ENCODE measurements at regions of chr6 and their contacts with region 1.

Region 1: GRCh38 chr6:161418463-161418945 is 144.6 kb upstream of the AGPAT4 start:
- DNase-seq: peak in 6 of 9 donors; percentile 2 to 40 (median 28)
- ATAC-seq: no peak
- H3K4me3 ChIP-seq: no peak overlapping the region
- H3K4me3 Mint-ChIP-seq: no peak overlapping the region
- H3K27ac ChIP-seq: no peak overlapping the region
- H3K27ac Mint-ChIP-seq: no peak overlapping the region
- H3K4me1 ChIP-seq: no peaks in the 10 kb centered on the region
- H3K4me1 Mint-ChIP-seq: no peaks in the 10 kb centered on the region
- H3K27me3 ChIP-seq: no peaks in the 10 kb centered on the region
- H3K27me3 Mint-ChIP-seq: peaks cover 0 to 18% (median 11%) of the 10 kb centered on the region in 5 donors

Region 2: GRCh38 chr6:161694995-161695394 is 276.5 kb after region 1 on chr6:
- CTCF ChIA-PET with region 1: no interaction called
- POLR2A ChIA-PET with region 1: no interaction called
- intact Hi-C with region 1: loop called in 1 of 2 experiments (anchors 1 kb)
- DNase-seq: no peak
- ATAC-seq: no peak
- H3K4me3 ChIP-seq: no peak overlapping the region
- H3K4me3 Mint-ChIP-seq: no peak overlapping the region
- H3K27ac ChIP-seq: no peak overlapping the region
- H3K27ac Mint-ChIP-seq: no peak overlapping the region
- H3K4me1 ChIP-seq: no peaks in the 10 kb centered on the region
- H3K4me1 Mint-ChIP-seq: peaks cover 0 to 2% (median 0%) of the 10 kb centered on the region in 7 donors
- H3K27me3 ChIP-seq: no peaks in the 10 kb centered on the region
- H3K27me3 Mint-ChIP-seq: no peaks in the 10 kb centered on the region

Region 3: GRCh38 chr6:162736961-162737360 is 1318.5 kb after region 1 on chr6:
- CTCF ChIA-PET with region 1: interaction called, 3 read pairs
- POLR2A ChIA-PET with region 1: no interaction called
- intact Hi-C with region 1: loop called in 1 of 2 experiments (anchors 2 kb)
- DNase-seq: no peak
- ATAC-seq: no peak
- H3K4me3 ChIP-seq: no peak overlapping the region
- H3K4me3 Mint-ChIP-seq: no peak overlapping the region
- H3K27ac ChIP-seq: no peak overlapping the region
- H3K27ac Mint-ChIP-seq: no peak overlapping the region
- H3K4me1 ChIP-seq: peaks cover 0 to 8% of the 10 kb centered on the region in 2 donors
- H3K4me1 Mint-ChIP-seq: peaks cover 5 to 13% (median 11%) of the 10 kb centered on the region in 7 donors
- H3K27me3 ChIP-seq: no peaks in the 10 kb centered on the region
- H3K27me3 Mint-ChIP-seq: no peaks in the 10 kb centered on the region

Measured in naive thymus-derived CD4-positive, alpha-beta T cell (primary cell).